Activated CD4-positive, alpha-beta memory T cell treated with anti-CD3 and anti-CD28 coated beads, Interleukin-2, amount 10 ng/mL, durations not matched to agents 7 days and 5 days (primary cell): ENCODE measurements at regions of chr11 and their contacts with region 1.

Region 1: DNA sequence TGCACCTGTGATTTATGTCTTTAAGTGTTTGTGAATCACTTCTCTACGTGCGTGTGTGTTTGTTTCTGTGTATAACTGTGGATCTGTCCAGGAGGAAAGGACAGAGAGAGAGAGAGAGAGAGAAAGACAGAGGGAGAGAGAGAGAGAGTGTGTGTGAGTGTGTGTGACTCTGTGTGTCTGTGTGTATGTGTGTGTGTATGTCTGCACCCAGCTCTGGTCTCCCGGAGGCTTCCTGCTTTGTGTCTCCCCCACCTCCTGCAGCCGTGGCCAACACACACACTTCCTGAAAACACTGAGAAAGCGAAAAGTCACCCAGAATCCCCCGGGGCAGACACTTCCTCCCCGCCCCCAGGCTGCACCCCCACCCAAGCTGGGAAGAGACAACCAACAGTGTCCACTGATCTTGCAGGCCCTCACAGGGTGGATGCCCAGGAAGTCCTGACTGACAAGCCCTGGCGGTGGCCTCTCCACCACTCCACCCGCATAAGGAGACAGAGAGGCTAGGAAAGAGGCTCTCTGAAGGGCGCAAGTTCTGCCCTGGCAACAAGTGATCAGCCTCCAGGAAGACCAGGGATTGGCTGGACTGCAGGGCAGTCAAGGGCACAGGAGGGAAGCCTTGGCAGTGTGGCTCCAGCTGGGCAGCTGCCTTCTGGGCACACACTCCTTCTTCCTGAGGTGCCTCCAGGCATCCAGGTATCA is 30.0 kb downstream of the ARAP1 start:
- DNase-seq: peak; percentile 90
- H3K4me3 Mint-ChIP-seq: peak overlapping the region; percentile 89
- H3K27ac Mint-ChIP-seq: peak overlapping the region; percentile 86
- H3K4me1 Mint-ChIP-seq: peaks cover 60% of the 10 kb centered on the region
- H3K27me3 Mint-ChIP-seq: no peaks in the 10 kb centered on the region

Region 2: DNA sequence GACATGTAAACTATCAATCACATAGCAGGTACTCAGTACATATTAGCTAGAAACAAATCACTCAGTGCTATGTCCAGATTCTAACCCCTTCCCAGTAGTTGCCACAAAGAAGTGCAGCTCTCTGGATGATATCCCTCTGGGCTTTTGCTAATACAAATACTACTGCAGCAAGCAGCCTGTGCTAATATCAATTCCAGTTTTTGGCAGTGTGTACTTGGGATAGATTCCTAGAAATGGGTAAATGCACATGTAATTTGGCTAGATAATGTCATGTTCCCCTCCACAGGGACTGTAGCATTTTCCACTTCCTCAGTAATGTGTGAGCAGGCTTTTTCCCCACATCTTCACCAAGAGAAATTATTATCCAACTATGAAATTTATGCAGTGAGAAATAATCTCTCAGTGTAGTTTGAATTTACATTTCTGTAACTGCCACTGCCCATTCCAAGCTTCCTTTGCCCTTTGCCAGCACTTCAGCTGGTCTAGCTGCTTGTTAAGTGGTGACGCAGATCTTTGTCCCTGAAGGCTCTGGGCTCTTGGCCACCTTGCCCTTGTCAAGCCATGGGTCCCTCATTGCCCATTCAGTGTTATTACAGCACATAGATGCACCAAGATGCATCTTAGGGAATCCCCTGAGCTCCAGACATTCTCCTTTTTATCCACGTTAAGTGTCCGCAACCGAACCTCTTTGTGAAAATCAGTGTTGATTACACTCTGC is 180.8 kb before region 1 on chr11:
- CTCF ChIA-PET with region 1: no interaction called
- POLR2A ChIA-PET with region 1: no interaction called
- DNase-seq: no peak
- H3K4me3 Mint-ChIP-seq: no peak overlapping the region
- H3K27ac Mint-ChIP-seq: no peak overlapping the region
- H3K4me1 Mint-ChIP-seq: no peaks in the 10 kb centered on the region
- H3K27me3 Mint-ChIP-seq: peaks cover 43% of the 10 kb centered on the region

Region 3: GRCh38 chr11:72683782-72684200 is 38.4 kb before region 1 on chr11:
- CTCF ChIA-PET with region 1: interaction called, 12 read pairs
- POLR2A ChIA-PET with region 1: interaction called, 3 read pairs
- DNase-seq: peak; percentile 70
- H3K4me3 Mint-ChIP-seq: no peak overlapping the region
- H3K27ac Mint-ChIP-seq: no peak overlapping the region
- H3K4me1 Mint-ChIP-seq: peaks cover 42% of the 10 kb centered on the region
- H3K27me3 Mint-ChIP-seq: peaks cover 6% of the 10 kb centered on the region

Region 4: DNA sequence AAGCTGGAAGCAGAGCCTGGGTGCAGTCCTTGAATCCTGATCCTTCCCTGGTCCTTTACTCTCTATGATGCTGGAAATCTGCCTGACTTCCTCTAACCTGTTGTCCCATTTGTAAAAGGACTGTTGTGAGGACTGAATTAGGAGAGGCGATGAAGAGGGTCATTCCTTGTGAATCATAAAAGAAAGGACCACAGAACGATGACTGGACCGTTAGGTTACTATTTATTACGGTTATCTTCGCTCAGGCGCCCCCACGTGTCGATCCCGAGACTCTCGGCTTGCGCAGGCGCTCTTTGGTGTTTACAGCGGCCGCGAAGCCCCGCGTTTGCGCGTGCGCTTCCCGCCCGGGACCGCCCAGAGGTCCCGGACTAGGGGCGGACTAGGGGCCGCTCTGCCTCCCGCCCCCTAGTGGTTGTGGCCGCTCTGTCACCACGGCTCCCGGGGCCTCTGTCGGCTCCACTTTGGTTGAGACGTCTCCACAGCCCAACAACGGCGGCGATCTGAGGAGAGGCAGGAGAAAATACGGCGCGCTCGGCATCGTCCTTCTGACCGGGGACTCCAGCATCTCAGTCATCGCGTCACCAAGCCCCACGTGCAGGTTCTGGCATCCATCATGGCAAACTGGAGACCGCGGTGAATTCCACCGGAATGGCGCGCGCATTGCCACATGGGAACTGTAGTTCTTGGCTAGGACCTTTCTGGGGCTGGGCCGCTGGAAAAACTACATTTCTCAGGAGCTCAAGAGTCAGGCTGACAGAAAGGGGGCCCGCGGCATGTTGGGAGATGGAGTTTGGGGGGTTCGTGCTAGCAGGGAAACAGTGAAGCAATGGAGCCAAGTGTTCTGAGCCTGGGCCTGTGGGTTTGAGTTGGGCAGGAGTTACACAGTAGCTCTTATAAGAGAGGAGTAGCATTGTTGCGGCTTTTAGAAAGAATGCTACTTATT is 71.5 kb after region 1 on chr11 and contains the start of gene STARD10:
- CTCF ChIA-PET with region 1: interaction called, 70 read pairs
- POLR2A ChIA-PET with region 1: interaction called, 8 read pairs
- DNase-seq: peak; percentile 95
- H3K4me3 Mint-ChIP-seq: peak within 1 kb of the TSS; percentile 93
- H3K27ac Mint-ChIP-seq: peak within 1 kb of the TSS; percentile 96
- H3K4me1 Mint-ChIP-seq: peaks cover 23% of the 10 kb centered on the region
- H3K27me3 Mint-ChIP-seq: no peaks in the 10 kb centered on the region
- total RNA-seq, gene STARD10: 11.3 to 11.6 TPM

Region 5: DNA sequence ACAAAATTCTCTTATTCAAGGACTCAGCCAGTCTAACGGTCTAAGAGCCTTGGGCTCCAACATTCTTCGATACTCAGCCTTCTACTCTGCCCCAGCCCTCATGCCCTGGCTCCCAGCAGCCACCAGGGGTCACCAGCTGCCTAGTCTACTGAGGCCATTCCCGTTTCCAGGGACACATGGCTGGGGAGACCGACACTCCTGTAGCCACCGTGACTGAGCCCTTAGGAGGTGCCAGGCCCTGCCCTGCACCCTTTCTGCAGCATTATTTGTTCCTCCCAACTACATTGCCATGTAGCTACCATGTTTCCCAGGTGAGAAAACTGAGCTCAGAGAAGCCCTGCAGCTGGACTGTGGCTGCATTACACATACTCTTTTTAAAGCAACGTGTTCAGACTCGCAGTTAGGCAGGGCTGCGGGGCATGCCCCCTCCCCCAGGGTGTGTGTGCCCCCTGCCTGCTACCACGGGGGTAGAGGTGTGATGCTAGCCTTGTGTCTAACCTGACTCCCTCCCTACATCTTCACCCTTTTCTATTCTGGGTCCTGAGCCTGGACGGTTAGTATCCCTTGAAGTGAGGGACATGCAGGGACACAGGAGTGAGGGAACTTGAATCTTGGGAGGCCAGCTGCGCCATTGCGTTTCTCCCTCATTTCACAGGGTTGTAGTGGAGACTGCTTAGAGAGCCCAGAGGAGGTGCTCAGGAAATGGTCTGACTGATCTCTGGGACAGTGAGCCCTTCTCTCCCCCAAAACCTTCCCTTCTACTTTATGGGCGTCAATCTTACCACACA is 109.5 kb after region 1 on chr11:
- CTCF ChIA-PET with region 1: interaction called, 15 read pairs
- POLR2A ChIA-PET with region 1: interaction called, 3 read pairs
- DNase-seq: peak; percentile 57
- H3K4me3 Mint-ChIP-seq: no peak overlapping the region
- H3K27ac Mint-ChIP-seq: peak overlapping the region; percentile 36
- H3K4me1 Mint-ChIP-seq: peaks cover 36% of the 10 kb centered on the region
- H3K27me3 Mint-ChIP-seq: no peaks in the 10 kb centered on the region

Region 6: DNA sequence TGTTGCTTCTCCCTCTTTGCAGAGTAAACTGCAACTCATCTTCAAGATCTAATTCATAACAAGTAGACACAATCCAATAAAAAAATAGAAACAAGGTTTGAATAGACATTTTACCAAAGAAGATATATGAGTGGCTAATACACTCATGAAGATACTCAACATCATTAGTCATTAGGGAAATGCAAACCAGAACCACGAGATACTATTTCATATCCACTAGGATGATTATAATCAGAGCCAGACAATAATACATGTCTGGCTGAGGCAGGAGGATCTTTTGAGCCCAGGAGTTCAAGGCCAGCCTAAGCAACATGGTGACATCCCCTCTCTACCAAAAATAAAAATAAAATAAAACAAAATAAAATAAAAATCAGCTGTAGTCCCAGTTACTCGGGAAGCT is 177.0 kb after region 1 on chr11:
- CTCF ChIA-PET with region 1: no interaction called
- POLR2A ChIA-PET with region 1: no interaction called
- DNase-seq: no peak
- H3K4me3 Mint-ChIP-seq: no peak overlapping the region
- H3K27ac Mint-ChIP-seq: no peak overlapping the region
- H3K4me1 Mint-ChIP-seq: no peaks in the 10 kb centered on the region
- H3K27me3 Mint-ChIP-seq: no peaks in the 10 kb centered on the region

Region 7: DNA sequence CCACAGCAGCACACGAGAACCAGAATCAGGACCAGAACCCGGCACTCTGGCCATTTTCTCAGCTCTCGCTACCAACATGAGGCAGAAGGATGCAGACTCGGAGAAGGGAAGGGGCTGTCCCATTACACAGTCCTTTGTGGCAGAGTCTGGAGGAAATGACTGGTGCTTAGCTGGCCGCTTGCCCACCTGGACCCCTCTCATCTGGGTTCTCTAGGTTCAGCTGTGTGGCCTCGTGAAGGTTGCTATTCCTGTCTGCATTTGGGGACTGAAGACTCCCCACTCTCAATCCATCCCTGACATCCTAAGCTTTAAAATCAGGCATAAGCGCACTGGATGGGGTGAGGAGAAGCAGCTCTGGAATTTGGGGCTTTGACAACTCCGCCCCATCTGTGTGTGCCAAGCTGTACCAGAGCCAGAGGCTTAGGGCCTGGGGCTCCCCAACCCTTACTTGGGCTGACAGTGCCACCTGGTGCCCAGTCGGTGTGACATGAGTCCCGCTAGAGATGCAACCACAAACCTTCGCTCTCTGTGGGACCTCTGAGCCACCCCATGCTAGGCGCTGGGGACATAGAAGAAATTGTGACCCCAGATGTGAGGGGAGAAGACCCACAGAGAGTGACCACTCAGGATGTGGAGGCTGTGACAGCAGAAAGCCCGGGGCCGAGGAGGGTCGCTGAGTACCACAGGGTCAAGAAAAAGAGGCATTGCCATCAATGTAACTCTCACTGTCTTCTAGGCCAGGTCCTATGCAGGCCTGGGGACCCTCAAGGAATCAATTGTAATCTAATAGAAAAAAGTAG is 455.8 kb after region 1 on chr11:
- CTCF ChIA-PET with region 1: interaction called, 35 read pairs
- POLR2A ChIA-PET with region 1: interaction called, 3 read pairs
- DNase-seq: peak; percentile 86
- H3K4me3 Mint-ChIP-seq: no peak overlapping the region
- H3K27ac Mint-ChIP-seq: no peak overlapping the region
- H3K4me1 Mint-ChIP-seq: peaks cover 23% of the 10 kb centered on the region
- H3K27me3 Mint-ChIP-seq: peaks cover 32% of the 10 kb centered on the region